Activated CD4-positive, alpha-beta T cell treated with anti-CD3 and anti-CD28 coated beads, Interleukin-2, amount 10 ng/mL, durations not matched to agents 7 days and 5 days (primary cell): ENCODE measurements at regions of chr16 and their contacts with region 1.

Region 1: GRCh38 chr16:31440516-31441184 is 1.9 kb downstream of the ZNF843 start:
- DNase-seq: no peak
- H3K4me3 Mint-ChIP-seq: no peak overlapping the region
- H3K27ac Mint-ChIP-seq: no peak overlapping the region
- H3K4me1 Mint-ChIP-seq: peaks cover 19% of the 10 kb centered on the region
- H3K27me3 Mint-ChIP-seq: peaks cover 1% of the 10 kb centered on the region

Region 2: GRCh38 chr16:31427441-31428278 is 13.0 kb before region 1 on chr16:
- CTCF ChIA-PET with region 1: interaction called, 14 read pairs
- POLR2A ChIA-PET with region 1: interaction called, 3 read pairs
- DNase-seq: peak; percentile 58
- H3K4me3 Mint-ChIP-seq: no peak overlapping the region
- H3K27ac Mint-ChIP-seq: peak overlapping the region; percentile 34
- H3K4me1 Mint-ChIP-seq: peaks cover 22% of the 10 kb centered on the region
- H3K27me3 Mint-ChIP-seq: no peaks in the 10 kb centered on the region

Region 3: GRCh38 chr16:31452631-31453106 is 12.0 kb after region 1 on chr16:
- CTCF ChIA-PET with region 1: interaction called, 23 read pairs
- POLR2A ChIA-PET with region 1: no interaction called
- DNase-seq: no peak
- H3K4me3 Mint-ChIP-seq: no peak overlapping the region
- H3K27ac Mint-ChIP-seq: no peak overlapping the region
- H3K4me1 Mint-ChIP-seq: peaks cover 40% of the 10 kb centered on the region
- H3K27me3 Mint-ChIP-seq: no peaks in the 10 kb centered on the region